Astrocyte of the cerebellum (primary cell): ENCODE measurements at regions of chr3 and their contacts with region 1.

Region 1: DNA sequence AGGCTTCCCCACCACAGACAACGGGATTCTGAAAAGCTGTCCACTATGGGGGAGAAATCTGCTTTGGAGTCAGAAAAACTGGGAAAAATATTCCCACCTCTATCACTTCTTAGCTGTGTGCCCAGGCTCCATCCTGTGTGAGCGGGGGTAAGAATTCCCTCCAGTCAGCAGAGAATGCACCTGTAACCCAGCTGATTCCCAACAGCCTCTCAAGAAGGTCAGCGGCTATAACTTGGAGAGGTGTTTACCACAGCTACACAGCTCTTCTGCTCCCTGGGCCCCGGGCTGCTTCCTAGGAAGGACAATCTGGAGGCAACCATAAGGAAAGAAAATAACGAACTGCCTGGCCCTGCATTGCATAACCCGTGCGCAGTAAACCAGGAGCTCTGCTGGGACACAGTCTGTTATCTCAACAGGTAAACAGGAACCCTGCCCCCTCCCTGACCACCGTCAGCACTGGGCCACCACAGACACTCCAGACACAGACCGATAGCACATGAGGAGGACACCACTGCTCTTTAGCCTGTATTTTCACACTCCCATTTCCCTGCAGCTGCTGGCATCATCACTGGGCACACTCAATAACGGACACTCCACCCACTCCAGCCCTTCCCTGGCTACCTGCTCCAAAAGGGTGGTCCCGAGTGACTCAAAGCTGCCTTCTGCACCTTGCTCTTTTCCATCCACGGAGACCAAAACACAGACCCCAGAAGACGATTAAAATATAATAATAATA is 2.1 kb downstream of the RAB43 start:
- DNase-seq: no peak
- H3K4me3 ChIP-seq: peak overlapping the region; percentile 80
- CTCF ChIP-seq: no peak

Region 2: DNA sequence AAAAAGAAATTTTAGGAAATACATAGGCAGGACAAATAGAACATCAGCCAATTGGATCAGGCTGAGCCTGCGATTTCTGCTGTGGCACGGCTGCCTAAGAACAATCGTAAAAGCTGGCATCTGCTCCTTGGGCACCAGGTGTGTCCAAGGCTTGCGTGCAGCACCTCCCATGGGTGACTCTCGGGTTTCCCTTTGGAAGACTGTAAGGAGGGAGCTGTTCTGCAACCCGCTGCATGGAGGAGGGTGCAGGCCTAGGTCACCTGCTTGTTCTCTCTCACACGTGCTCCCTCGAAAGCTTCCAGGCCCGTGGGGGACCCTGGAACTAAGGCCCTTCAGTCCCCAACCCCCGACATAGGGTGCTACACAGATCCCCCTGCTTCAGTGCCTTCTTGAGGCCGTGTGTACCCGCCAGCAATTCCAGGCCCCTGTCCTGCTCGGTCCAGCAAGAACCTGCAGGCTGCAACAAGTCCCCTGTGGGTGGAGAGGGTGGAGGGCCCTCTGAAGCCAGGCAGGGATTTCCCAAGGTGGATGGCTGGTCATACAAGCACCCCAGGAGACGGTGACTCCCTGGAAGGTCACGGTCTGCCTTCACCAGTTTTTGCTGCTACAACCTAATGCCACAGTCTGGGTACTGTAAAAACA is 55.6 kb before region 1 on chr3:
- in situ Hi-C with region 1: loop called (anchors 5 kb)
- DNase-seq: no peak
- H3K4me3 ChIP-seq: no peak overlapping the region
- CTCF ChIP-seq: no peak

Region 3: DNA sequence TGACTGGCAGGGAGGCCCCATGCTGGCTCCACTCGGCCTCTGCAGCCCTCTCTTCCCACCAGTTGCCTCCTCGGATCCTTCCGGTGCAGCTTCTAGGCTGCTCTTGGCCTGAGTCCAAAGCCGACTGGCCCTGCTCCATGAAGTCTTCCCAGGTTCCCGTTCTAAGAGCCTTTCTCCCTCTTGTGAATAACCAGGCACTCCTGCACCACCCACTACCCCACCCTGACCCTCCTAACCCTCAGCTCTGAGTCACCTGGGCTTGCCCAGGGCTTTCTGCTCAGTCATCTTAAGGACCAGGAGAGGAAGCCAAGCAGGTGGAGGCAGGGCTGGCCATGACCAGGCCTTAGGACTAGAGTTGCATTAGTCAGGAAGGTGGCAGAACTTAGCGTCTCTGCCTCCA is 92.2 kb after region 1 on chr3:
- in situ Hi-C with region 1: no loop called
- DNase-seq: no peak
- H3K4me3 ChIP-seq: no peak overlapping the region
- CTCF ChIP-seq: no peak